Head of caudate nucleus (tissue), 42 donors: ENCODE measurements at regions of chr4 and their contacts with region 1.

Region 1: DNA sequence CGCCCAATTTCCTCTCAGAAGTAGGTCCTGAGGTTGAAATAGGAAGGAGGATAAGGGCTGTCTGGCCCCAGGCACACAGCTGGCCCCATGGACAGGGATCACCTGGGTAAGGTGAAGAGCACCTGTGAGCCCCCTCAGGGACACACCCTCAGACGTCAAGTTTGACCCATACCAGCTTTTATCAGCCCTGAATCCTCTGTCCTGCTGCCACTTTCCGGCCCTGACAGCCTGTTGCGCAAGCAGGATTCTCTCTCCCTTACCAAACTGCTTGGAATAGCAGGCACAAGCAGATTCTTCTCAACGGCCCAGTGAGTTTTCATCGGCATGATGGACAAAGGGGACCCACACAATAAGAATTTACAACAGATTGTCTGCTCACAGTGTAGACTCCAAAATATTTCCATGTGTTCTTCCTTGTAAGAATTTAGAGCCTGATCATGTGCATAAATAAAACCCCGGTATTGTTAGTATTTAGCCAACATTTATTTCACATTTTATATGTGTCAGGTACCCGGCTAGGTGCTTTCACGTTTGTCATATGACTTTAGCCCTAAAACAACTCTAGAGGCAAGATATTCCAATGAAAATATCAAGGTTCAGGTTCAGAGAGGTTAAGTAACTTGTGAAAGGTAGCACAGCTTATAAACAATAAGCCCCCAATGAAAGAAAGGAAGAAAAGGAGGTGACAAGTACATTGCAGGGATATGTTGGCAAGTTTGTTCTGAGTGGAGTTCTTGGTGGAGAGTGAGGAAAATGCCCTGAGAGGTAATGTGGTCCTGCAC is 107.2 kb upstream of the KIT start:
- DNase-seq: peak in 1 of 42 donors; percentile 29

Region 2: DNA sequence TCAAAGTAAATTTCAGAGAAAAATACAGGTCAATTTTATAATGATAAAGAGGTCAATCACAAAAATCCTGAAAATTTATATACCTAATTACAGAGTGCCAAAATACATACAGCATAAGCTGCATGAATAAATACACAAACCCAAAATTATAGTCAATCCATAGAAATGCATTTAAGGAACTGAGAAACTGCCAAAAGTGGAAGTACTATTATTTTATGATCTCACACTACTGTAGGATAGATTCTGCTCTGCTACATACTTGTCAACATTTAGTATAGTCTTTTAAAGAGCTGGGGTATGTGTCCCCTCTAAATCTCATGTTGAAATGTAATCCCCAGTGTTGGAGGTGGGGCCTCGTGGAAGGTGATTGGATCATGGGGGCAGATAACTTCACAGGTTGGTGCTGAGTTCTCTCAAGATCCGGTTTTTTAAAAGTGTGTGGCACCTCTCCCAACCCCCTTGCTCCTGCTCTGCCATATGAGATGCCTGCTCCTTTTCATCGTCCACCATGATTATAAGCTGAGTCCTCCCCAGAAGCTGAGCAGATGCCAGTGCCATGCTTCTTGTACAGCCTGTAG is 517.9 kb before region 1 on chr4:
- intact Hi-C with region 1: no loop called
- DNase-seq: no peak

Region 3: GRCh38 chr4:54499308-54500074 is 51.1 kb before region 1 on chr4:
- intact Hi-C with region 1: loop called (anchors 10 kb)
- DNase-seq: peak in 3 of 42 donors; percentile 19 to 38 (median 25)